T-cell (primary cell): ENCODE measurements at regions of chr12 and their contacts with region 1.

Region 1: DNA sequence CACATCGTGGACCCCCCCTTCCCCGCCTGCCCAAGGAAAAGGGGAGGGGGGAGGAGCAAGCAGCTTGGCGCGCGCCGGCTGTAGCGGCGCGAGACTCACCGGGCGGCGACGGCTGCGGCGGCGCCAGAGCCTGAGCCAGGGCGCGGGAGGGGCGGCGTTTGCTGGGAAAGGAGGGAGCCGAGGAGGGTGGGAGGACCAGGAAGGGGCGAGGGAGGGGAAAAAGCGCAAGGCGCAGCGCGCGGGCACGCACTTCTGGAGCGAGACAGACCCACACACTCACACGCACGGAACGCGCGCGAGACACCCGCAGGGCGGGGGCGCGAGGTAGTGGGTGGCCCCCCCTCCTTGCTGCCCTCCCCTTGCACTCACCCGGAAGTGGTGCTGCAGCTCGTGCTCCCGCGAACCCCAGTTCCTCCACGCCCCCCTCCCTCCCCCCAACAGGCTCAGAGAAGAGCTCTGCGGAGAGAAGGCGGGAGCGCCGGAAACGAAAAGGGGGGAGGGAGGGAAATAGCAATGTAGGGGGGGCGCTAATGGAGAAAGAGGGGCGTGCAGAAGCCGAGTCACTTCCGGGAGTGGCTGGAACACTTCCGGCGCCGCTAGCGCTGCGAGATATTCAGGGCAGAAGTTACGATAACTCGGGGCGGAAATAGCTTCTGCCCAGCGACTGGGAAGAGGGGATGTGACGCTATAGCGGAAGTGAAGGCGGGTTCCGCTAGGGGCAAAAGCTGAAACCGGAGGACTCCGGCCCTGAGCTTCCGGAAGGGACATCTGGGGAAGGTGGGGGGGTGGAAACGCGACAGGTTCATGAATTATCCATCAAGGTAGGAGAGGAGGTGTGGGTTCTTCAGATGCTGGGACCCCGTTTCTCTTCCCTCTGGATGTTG is at the start of gene ZNF384:
- DNase-seq: peak; percentile 84 to 98 (median 95)
- ATAC-seq: peak; percentile 81 to 84 (median 82)
- H3K4me3 ChIP-seq: peak within 1 kb of the TSS; percentile 75 to 84
- H3K4me3 Mint-ChIP-seq: peak within 1 kb of the TSS; percentile 89 to 92 (median 91)
- H3K27ac ChIP-seq: peak within 1 kb of the TSS; percentile 95
- H3K27ac Mint-ChIP-seq: peak within 1 kb of the TSS; percentile 93 to 97
- H3K4me1 ChIP-seq: peaks cover 15 to 33% of the 10 kb centered on the region in 2 experiments
- H3K4me1 Mint-ChIP-seq: peaks cover 52 to 65% (median 63%) of the 10 kb centered on the region in 3 donors
- H3K27me3 ChIP-seq: peaks cover 0 to 2% of the 10 kb centered on the region in 2 experiments
- H3K27me3 Mint-ChIP-seq: no peaks in the 10 kb centered on the region
- total RNA-seq, gene ZNF384: 68.6 to 82.9 (median 79.4) TPM

Region 2: GRCh38 chr12:6493497-6494257 is 195.6 kb before region 1 on chr12 and contains the start of gene NCAPD2:
- CTCF ChIA-PET with region 1: no interaction called
- POLR2A ChIA-PET with region 1: interaction called, 3 to 11 read pairs
- DNase-seq: peak; percentile 86 to 97 (median 94)
- ATAC-seq: peak; percentile 86 to 91 (median 90)
- H3K4me3 ChIP-seq: peak within 1 kb of the TSS; percentile 94 to 99
- H3K4me3 Mint-ChIP-seq: peak within 1 kb of the TSS; percentile 93 to 97 (median 93)
- H3K27ac ChIP-seq: peak within 1 kb of the TSS; percentile 88
- H3K27ac Mint-ChIP-seq: peak within 1 kb of the TSS; percentile 91 to 98
- H3K4me1 ChIP-seq: peaks cover 21 to 33% of the 10 kb centered on the region in 2 experiments
- H3K4me1 Mint-ChIP-seq: peaks cover 37 to 40% (median 40%) of the 10 kb centered on the region in 3 donors
- H3K27me3 ChIP-seq: no peaks in the 10 kb centered on the region
- H3K27me3 Mint-ChIP-seq: no peaks in the 10 kb centered on the region
- total RNA-seq, gene NCAPD2: 32.8 to 43.8 (median 40.7) TPM

Region 3: DNA sequence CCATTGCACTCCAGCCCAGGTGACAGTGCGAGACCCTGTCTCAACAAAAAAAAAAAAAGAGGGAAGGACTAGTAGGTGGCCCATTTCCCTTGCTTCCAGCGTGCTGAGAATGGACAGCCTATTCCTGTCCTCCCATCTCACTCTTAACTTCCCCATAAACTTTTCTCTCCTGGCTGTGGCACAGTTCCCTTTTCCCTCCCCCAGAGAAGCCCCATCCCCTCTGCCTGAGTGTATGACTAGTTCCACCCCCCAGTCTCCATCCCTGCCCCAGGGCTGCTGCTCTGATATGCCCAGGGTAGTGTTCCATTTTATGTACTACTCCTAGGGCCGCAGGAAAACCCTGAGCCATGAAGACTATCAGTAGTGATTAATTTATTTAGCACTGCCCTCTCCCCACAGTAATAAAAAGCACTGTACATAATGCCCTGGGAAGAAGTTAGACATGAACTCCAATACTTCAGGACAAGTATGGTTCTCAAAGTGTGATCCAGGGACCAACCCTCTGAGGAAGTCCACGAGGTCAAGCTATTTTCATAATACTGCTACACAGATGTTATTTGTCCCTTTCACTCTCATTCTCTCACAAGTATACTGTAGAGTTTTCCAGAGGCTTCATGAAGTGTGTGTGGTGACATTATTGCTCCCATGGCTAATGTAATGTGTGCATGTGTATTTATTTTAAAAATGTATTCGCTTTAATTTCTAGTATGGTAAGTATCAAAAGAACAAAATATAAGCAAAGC is 70.6 kb before region 1 on chr12:
- CTCF ChIA-PET with region 1: interaction called, 7 to 14 read pairs
- POLR2A ChIA-PET with region 1: interaction called in 1 of 2 experiments, 8 read pairs
- DNase-seq: no peak
- ATAC-seq: no peak
- H3K4me3 ChIP-seq: no peak overlapping the region
- H3K4me3 Mint-ChIP-seq: no peak overlapping the region
- H3K27ac ChIP-seq: no peak overlapping the region
- H3K27ac Mint-ChIP-seq: peak overlapping the region; percentile 48 to 61
- H3K4me1 ChIP-seq: peaks cover 0 to 27% of the 10 kb centered on the region in 2 experiments
- H3K4me1 Mint-ChIP-seq: peaks cover 20 to 40% (median 38%) of the 10 kb centered on the region in 3 donors
- H3K27me3 ChIP-seq: no peaks in the 10 kb centered on the region
- H3K27me3 Mint-ChIP-seq: no peaks in the 10 kb centered on the region

Region 4: DNA sequence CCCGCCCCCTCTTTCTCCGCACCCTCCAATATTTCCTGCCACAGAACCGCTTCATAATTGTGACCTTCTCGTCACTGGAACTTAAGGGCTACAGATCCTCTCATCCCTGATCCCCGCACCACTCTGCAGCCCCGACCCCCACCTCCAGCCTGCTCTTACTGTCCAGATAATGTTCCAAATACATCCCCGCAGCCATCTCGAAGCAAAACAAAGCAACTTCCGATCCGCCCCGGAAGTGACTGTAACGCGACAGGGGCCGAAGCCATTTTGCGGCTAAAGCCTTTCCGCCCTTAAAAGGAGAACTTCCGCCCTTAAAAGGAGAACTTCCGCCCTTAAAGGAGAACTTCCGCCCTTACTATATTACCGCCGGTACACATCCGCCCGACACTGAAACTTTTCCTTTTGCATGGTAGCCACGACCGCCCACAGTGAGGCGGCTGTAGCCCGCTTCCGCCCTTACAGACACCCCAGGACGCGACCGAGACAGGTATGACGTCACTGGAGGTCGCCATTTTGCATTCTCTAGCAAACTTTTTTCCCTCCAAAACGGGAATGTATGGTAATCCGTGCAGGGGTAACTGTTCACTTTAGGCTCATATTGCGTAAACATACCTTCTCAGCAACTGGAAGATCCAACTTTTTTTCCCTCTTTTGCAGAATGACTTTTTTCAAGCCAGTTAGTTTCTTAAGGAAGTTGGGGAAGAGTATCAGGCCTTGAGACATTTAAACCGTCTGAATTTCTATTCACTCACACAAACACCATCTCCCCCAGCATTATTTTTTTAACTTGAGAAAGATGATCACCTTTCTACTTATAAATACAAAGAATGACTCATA is 26.1 kb before region 1 on chr12 and contains the start of gene ING4:
- CTCF ChIA-PET with region 1: interaction called, 4 to 12 read pairs
- POLR2A ChIA-PET with region 1: interaction called, 3 to 12 read pairs
- DNase-seq: peak; percentile 80 to 99 (median 97)
- ATAC-seq: peak; percentile 98 to 99 (median 99)
- H3K4me3 ChIP-seq: peak within 1 kb of the TSS; percentile 81 to 89
- H3K4me3 Mint-ChIP-seq: peak within 1 kb of the TSS; percentile 91 to 93 (median 91)
- H3K27ac ChIP-seq: peak within 1 kb of the TSS; percentile 84
- H3K27ac Mint-ChIP-seq: peak within 1 kb of the TSS; percentile 93 to 98
- H3K4me1 ChIP-seq: peaks cover 10 to 16% of the 10 kb centered on the region in 2 experiments
- H3K4me1 Mint-ChIP-seq: peaks cover 36 to 40% (median 38%) of the 10 kb centered on the region in 3 donors
- H3K27me3 ChIP-seq: no peaks in the 10 kb centered on the region
- H3K27me3 Mint-ChIP-seq: no peaks in the 10 kb centered on the region
- total RNA-seq, gene ING4: 34.0 to 71.3 (median 64.5) TPM

Region 5: GRCh38 chr12:6723607-6724396 is 34.6 kb after region 1 on chr12 and contains the start of gene COPS7A:
- CTCF ChIA-PET with region 1: interaction called, 3 to 30 read pairs
- POLR2A ChIA-PET with region 1: interaction called, 9 to 11 read pairs
- DNase-seq: peak; percentile 85 to 96 (median 90)
- ATAC-seq: peak; percentile 90
- H3K4me3 ChIP-seq: peak within 1 kb of the TSS; percentile 58 to 65
- H3K4me3 Mint-ChIP-seq: peak within 1 kb of the TSS; percentile 84 to 87 (median 84)
- H3K27ac ChIP-seq: peak within 1 kb of the TSS; percentile 83
- H3K27ac Mint-ChIP-seq: peak within 1 kb of the TSS; percentile 91 to 99
- H3K4me1 ChIP-seq: peaks cover 10 to 16% of the 10 kb centered on the region in 2 experiments
- H3K4me1 Mint-ChIP-seq: peaks cover 24 to 30% (median 29%) of the 10 kb centered on the region in 3 donors
- H3K27me3 ChIP-seq: no peaks in the 10 kb centered on the region
- H3K27me3 Mint-ChIP-seq: no peaks in the 10 kb centered on the region
- total RNA-seq, gene COPS7A: 18.5 to 33.1 (median 31.8) TPM

Region 6: GRCh38 chr12:6851921-6852650 is 162.8 kb after region 1 on chr12 and contains the start of gene USP5:
- CTCF ChIA-PET with region 1: interaction called in 1 of 2 experiments, 25 read pairs
- POLR2A ChIA-PET with region 1: interaction called, 3 to 11 read pairs
- DNase-seq: peak; percentile 92 to 100 (median 99)
- ATAC-seq: peak; percentile 78 to 81 (median 79)
- H3K4me3 ChIP-seq: peak within 1 kb of the TSS; percentile 69 to 97
- H3K4me3 Mint-ChIP-seq: peak within 1 kb of the TSS; percentile 79 to 98 (median 94)
- H3K27ac ChIP-seq: peak within 1 kb of the TSS; percentile 94
- H3K27ac Mint-ChIP-seq: peak within 1 kb of the TSS; percentile 98 to 99
- H3K4me1 ChIP-seq: peaks cover 20 to 34% of the 10 kb centered on the region in 2 experiments
- H3K4me1 Mint-ChIP-seq: peaks cover 22 to 38% (median 33%) of the 10 kb centered on the region in 3 donors
- H3K27me3 ChIP-seq: no peaks in the 10 kb centered on the region
- H3K27me3 Mint-ChIP-seq: no peaks in the 10 kb centered on the region
- total RNA-seq, gene USP5: 64.2 to 95.8 (median 85.8) TPM